ENCODE measurements at regions of chr7 and their contacts with region 1.

Region 1: DNA sequence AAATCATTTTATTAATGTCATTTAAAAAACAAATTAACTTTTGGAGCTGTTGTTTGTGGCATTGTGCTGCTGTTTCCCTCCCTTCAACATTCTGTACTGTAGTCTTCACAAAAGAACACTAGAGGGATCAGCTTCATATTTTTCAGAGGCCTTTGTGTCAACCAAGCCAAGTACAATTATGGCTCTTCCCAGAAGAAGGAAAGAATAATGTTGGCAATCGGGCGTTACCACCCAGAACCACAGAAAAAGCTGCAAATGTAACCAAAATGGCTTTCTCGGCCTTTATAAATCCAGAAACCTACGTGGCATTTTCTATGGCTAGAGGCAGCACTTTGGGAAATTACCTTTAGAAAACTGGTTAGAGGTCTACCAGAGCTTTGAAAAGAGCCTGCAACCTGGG is 98.8 kb upstream of the COL1A2 start:
- ATAC-seq: peak in 5 of 8 experiments; percentile 49 to 92 (median 75)
- H3K4me3 ChIP-seq: no peak overlapping the region
- H3K27ac ChIP-seq: no peak overlapping the region
- H3K4me1 ChIP-seq: peaks cover 3 to 5% of the 10 kb centered on the region in 2 donors

Region 2: DNA sequence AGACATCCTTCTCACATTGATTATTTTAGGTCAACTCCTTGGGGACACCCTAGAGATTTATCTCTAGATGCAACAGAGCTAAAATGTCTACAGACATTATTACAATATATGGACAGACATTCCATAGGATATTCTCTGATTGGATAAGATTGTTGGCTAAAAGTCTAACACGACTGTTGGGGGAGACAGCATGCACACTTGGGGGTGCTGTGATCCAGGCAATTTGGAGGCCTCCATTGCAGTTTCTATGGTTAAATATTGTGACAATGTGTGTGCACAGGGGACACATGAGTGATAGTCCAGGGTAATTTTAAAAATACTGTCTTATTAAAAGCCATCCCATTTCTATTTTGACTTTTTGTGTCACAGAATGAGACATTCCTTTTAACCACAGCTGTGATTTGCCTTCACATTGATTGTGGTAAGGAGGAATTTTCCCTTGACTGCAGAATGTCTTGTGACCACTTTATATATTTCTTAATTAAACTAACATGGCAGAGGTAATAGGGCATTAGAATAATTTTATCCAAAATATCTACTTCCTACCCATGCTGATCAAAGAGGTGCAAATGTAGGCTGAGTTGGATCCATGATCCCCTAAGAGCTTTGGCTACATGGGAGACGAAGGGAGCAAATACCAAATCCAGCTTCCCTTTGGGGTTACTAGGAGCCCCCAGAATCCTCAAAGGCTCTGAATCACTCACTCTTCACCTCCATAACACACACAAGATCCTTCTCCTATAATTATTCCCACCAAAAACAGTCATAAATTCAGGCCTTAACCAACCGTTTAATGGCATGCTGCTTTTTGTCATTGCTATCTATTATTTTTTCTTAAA is 412.6 kb before region 1 on chr7:
- in situ Hi-C with region 1: no loop called
- ATAC-seq: peak in 3 of 8 experiments; percentile 21 to 24 (median 23)
- H3K4me3 ChIP-seq: no peak overlapping the region
- H3K27ac ChIP-seq: no peak overlapping the region
- H3K4me1 ChIP-seq: no peaks in the 10 kb centered on the region

Region 3: DNA sequence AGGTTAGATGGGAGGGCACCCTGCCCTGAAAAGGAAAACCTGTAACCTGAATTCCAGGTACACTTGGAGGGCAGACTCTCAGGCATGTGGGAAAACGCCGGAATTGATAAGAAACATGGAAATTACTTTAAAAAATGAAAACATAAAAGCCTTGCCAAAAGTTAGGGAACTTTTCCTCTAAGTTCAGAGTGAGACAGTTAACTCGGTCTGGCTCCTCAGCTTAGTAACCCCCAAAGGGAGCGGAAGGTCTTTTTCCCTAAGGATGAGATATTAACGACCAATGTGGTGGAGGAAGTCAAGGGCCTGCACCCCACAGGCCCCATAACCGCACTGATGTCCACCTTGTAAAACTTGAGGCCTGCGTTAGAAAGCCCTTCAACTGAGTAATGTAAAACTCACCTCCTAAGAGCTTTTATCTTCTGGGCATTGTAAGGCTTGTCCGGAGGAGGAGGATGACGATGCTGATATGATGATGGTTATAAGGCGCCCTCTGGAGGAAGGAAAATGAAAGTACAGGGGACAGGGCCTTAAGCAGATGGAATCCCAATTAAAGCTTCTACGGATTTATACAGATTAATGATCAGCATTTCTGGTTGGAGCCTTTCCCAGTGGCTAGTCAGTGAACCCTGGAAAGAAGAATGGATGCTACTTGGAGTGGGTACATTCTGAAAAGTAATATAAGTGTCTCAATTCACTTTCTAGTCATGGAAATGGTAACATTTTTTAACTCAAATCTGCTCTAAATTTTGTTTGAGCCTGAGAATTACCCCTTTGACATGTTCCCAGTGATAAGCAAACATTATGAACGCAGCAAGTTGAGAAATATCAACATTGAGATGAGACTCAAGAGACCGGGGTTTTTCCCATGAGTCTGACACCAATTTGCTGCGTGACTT is 99.5 kb after region 1 on chr7:
- in situ Hi-C with region 1: loop called in 3 of 9 experiments (anchors 10 kb)
- ATAC-seq: peak in 4 of 8 experiments; percentile 26 to 88 (median 32)
- H3K4me3 ChIP-seq: no peak overlapping the region
- H3K27ac ChIP-seq: no peak overlapping the region
- H3K4me1 ChIP-seq: peaks cover 0 to 4% of the 10 kb centered on the region in 2 donors